K562 (cell line): ENCODE measurements at regions of chr1 and their contacts with region 1.

Region 1: GRCh38 chr1:66764994-66765578 is 12.8 kb downstream of the DYNLT5 start:
- DNase-seq: peak; percentile 44 to 72 (median 52)
- ATAC-seq: peak; percentile 85
- H3K4me3 ChIP-seq: no peak overlapping the region
- H3K27ac ChIP-seq: no peak overlapping the region
- H3K4me1 ChIP-seq: peaks cover 0 to 4% of the 10 kb centered on the region in 2 experiments; a peak in 3 of 5 replicates
- H3K27me3 ChIP-seq: no peaks in the 10 kb centered on the region
- CTCF ChIP-seq: peak; percentile 50 to 91 (median 66); a peak in 5 of 6 replicates
- EP300 ChIP-seq: 0 out of 2 replicates have a peak, but pooled peaks have one; percentile 14
- POLR2A ChIP-seq: no peak
- RAD21 ChIP-seq: peak; percentile 91 to 93

Region 2: GRCh38 chr1:66624412-66625060 is 140.6 kb before region 1 on chr1:
- CTCF ChIA-PET with region 1: no interaction called
- POLR2A ChIA-PET with region 1: no interaction called
- in situ Hi-C with region 1: no loop called
- intact Hi-C with region 1: no loop called
- DNase-seq: no peak
- ATAC-seq: no peak
- H3K4me3 ChIP-seq: no peak overlapping the region
- H3K27ac ChIP-seq: no peak overlapping the region
- H3K4me1 ChIP-seq: no peaks in the 10 kb centered on the region
- H3K27me3 ChIP-seq: peaks cover 0 to 1% of the 10 kb centered on the region in 2 experiments; a peak in 1 of 5 replicates
- CTCF ChIP-seq: no peak
- EP300 ChIP-seq: no peak
- POLR2A ChIP-seq: no peak
- RAD21 ChIP-seq: no peak

Region 3: GRCh38 chr1:66860529-66860928 is 95.4 kb after region 1 on chr1:
- CTCF ChIA-PET with region 1: no interaction called
- POLR2A ChIA-PET with region 1: no interaction called
- in situ Hi-C with region 1: no loop called
- intact Hi-C with region 1: loop called (anchors 5 kb)
- DNase-seq: no peak
- ATAC-seq: no peak
- H3K4me3 ChIP-seq: no peak overlapping the region
- H3K27ac ChIP-seq: no peak overlapping the region
- H3K4me1 ChIP-seq: no peaks in the 10 kb centered on the region
- H3K27me3 ChIP-seq: no peaks in the 10 kb centered on the region
- CTCF ChIP-seq: no peak
- EP300 ChIP-seq: no peak
- POLR2A ChIP-seq: no peak
- RAD21 ChIP-seq: no peak

Region 4: DNA sequence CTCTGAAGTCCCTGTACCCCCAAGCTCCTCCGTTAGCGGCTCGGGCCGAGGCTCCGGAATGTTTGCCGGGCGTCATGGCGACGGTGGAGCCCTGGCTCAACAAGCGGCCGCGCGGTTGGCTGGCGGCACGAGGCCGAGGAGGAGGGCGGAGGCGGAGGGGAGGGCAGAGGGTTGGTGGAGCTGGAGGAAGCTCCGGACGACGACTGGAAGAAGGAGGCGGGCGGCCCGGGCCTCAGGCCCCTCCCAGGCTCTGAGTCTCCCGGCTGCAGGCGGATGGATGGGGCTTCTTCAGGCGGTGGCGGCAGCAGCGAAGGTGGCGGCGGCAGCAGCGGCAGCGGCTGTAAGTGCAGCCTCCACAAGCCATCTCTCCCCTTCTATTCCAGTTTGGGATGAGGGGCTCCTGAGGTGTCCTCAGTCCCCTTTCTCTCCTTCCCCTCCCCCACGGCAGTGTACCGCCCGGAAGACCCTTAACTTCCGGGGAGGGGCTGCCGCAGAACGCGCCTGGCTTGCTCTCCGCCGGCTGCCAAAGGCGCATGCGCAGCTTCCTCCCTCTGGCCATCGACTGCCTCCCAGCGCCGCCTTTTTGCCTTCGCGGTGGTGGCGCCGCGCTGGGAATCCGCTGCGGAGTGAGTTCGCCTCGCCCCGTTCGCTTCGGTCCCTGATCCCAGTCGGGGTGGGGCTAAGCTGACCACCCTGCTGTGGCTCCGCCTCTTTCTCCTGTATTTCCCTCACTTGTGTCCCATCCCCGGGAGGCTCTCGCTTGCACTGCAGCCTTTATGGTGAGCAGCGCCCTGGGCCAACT is 159.9 kb after region 1 on chr1 and contains the starts of genes DNAI4 and MIER1:
- CTCF ChIA-PET with region 1: no interaction called
- POLR2A ChIA-PET with region 1: no interaction called
- in situ Hi-C with region 1: no loop called
- intact Hi-C with region 1: loop called (anchors 2 kb)
- DNase-seq: peak; percentile 98 to 99 (median 99)
- ATAC-seq: peak; percentile 85
- H3K4me3 ChIP-seq: peak within 1 kb of the TSS; percentile 85
- H3K27ac ChIP-seq: peak within 1 kb of the TSS; percentile 81
- H3K4me1 ChIP-seq: peaks cover 0 to 16% of the 10 kb centered on the region in 2 experiments; a peak in 3 of 5 replicates
- H3K27me3 ChIP-seq: no peaks in the 10 kb centered on the region
- CTCF ChIP-seq: peak; percentile 6 to 37 (median 10); a peak in 3 of 6 replicates
- EP300 ChIP-seq: no peak; the same call in 1 of the 2 replicates
- POLR2A ChIP-seq: peak; percentile 88
- RAD21 ChIP-seq: peak in 1 of 2 experiments; percentile 9; a peak in 1 of 4 replicates
- polyA plus RNA-seq, gene DNAI4: 1.8 to 2.2 TPM
- polyA plus RNA-seq, gene MIER1: 21.5 to 23.7 TPM

Region 5: DNA sequence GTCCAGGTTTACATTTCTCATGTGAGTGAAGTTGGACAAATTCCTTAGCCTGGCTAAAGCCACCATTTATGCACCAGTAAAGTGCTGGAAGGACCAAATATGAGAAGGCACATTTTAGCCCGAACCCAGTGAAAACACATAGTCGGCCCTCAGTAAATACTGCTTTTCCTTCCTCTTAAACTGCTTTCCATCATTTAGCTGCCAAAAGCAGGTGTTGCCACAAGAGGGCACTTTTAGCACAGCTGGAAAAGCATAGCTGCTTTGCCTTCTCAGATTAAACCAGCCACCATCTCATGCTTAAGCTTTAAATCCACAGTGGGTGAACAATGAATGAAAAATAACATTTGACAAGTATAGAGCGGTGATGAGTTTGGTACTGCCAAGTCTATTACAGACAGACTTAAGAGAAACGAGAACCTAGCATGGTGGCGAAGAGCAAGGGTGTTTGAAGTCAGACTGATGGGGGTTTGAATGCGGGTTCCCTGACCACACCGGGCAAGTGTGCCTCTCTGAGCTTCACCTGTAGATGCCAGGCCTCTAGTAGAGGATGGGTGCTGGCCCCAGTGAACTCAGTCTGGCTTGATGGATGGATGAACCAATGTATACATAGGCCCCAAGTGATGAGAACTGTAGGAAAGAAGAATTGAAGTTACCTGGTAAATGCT is 231.1 kb after region 1 on chr1:
- CTCF ChIA-PET with region 1: interaction called, 7 read pairs
- POLR2A ChIA-PET with region 1: no interaction called
- in situ Hi-C with region 1: no loop called
- intact Hi-C with region 1: loop called (anchors 2 kb)
- DNase-seq: peak; percentile 33 to 77 (median 43)
- ATAC-seq: peak; percentile 88
- H3K4me3 ChIP-seq: no peak overlapping the region
- H3K27ac ChIP-seq: no peak overlapping the region
- H3K4me1 ChIP-seq: no peaks in the 10 kb centered on the region
- H3K27me3 ChIP-seq: no peaks in the 10 kb centered on the region
- CTCF ChIP-seq: peak; percentile 88 to 93 (median 92)
- EP300 ChIP-seq: no peak
- POLR2A ChIP-seq: no peak
- RAD21 ChIP-seq: peak; percentile 93 to 96

Region 6: DNA sequence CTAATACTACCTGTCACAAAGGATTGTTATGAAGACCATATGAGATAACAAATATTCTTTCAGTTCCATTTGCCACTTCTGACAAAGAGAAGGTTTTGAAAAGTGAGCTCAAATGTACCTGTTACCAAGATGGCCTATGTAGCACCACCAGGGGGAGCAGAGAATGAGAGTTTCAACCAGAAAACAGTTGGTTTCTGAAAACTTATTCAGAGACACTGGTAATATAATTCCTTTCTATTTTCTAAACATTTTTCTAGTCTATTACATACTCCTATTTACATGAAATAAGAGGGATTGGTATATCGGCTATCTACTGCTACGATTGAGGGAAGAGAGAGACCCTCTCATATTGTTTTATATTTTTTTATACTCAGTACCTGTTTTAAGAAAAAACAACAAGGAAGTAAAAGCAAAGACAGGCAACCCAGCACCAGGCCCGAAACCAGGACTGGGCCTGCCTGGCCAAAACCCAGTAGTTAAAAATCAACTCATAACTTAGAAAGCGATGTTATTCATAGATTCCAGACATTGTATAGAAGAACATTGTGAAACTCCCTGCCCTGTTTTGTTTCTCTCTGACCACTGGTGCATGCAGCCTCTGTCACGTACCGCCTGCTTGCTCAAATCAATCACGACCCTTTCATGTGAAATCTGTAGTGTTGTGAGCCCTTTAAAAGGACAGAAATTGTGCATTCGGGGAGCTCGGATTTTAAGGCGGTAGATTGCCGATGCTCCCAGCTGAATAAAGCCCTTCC is 449.5 kb after region 1 on chr1:
- CTCF ChIA-PET with region 1: interaction called, 5 read pairs
- POLR2A ChIA-PET with region 1: no interaction called
- in situ Hi-C with region 1: no loop called
- intact Hi-C with region 1: loop called (anchors 5 kb)
- DNase-seq: peak in 1 of 4 experiments; percentile 48
- ATAC-seq: peak; percentile 49
- H3K4me3 ChIP-seq: no peak overlapping the region
- H3K27ac ChIP-seq: no peak overlapping the region
- H3K4me1 ChIP-seq: peaks cover 4 to 13% of the 10 kb centered on the region in 2 experiments; a peak in 1 of 5 replicates
- H3K27me3 ChIP-seq: no peaks in the 10 kb centered on the region
- CTCF ChIP-seq: peak; percentile 47 to 57 (median 51); a peak in 5 of 6 replicates
- EP300 ChIP-seq: no peak
- POLR2A ChIP-seq: no peak
- RAD21 ChIP-seq: peak in 1 of 2 experiments; percentile 37; a peak in 2 of 4 replicates

Region 7: GRCh38 chr1:67347688-67348472 is 582.8 kb after region 1 on chr1:
- CTCF ChIA-PET with region 1: no interaction called
- POLR2A ChIA-PET with region 1: no interaction called
- in situ Hi-C with region 1: no loop called
- intact Hi-C with region 1: loop called (anchors 5 kb)
- DNase-seq: peak; percentile 33 to 71 (median 58)
- ATAC-seq: peak; percentile 96
- H3K4me3 ChIP-seq: no peak overlapping the region
- H3K27ac ChIP-seq: no peak overlapping the region
- H3K4me1 ChIP-seq: peaks cover 0 to 6% of the 10 kb centered on the region in 2 experiments; a peak in 1 of 5 replicates
- H3K27me3 ChIP-seq: no peaks in the 10 kb centered on the region
- CTCF ChIP-seq: peak; percentile 69 to 87 (median 84)
- EP300 ChIP-seq: no peak
- POLR2A ChIP-seq: no peak
- RAD21 ChIP-seq: peak; percentile 73 to 93

Region 8: DNA sequence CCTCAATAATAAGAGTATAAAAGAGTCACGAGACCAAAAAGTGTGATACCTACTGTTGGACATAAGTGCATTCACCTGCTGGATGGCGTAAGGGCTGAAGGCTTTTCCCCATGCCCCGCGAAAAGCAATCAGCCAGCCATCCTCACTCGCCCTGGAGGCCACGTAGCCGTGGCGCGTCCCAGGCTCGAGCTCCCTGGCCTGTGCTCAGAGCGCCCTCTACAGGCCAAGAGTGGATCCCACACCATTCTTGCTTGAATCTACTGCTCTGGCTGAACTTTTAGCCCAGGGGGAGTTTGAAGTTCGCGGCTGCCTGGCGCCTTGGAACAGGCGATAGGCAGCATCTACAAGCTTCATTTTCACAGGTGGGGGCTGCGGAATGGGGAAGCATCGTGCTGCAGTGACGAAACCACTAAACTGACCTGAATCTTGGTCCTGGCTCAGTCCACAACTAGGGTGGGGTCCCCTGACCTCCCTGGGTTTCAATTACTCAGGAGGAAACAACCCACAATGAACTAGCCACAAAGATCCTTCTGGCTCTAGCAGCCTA is 735.4 kb after region 1 on chr1:
- CTCF ChIA-PET with region 1: no interaction called
- POLR2A ChIA-PET with region 1: no interaction called
- in situ Hi-C with region 1: loop called (anchors 5 kb)
- intact Hi-C with region 1: loop called (anchors 5 kb)
- DNase-seq: peak; percentile 89 to 95 (median 90)
- ATAC-seq: peak; percentile 99
- H3K4me3 ChIP-seq: no peak overlapping the region
- H3K27ac ChIP-seq: no peak overlapping the region
- H3K4me1 ChIP-seq: peaks cover 0 to 5% of the 10 kb centered on the region in 2 experiments; a peak in 3 of 5 replicates
- H3K27me3 ChIP-seq: no peaks in the 10 kb centered on the region
- CTCF ChIP-seq: peak; percentile 97 to 99 (median 98)
- EP300 ChIP-seq: no peak
- POLR2A ChIP-seq: no peak
- RAD21 ChIP-seq: peak; percentile 98 to 99